ENCODE measurements at regions of chr15 and their contacts with region 1.

Region 1: DNA sequence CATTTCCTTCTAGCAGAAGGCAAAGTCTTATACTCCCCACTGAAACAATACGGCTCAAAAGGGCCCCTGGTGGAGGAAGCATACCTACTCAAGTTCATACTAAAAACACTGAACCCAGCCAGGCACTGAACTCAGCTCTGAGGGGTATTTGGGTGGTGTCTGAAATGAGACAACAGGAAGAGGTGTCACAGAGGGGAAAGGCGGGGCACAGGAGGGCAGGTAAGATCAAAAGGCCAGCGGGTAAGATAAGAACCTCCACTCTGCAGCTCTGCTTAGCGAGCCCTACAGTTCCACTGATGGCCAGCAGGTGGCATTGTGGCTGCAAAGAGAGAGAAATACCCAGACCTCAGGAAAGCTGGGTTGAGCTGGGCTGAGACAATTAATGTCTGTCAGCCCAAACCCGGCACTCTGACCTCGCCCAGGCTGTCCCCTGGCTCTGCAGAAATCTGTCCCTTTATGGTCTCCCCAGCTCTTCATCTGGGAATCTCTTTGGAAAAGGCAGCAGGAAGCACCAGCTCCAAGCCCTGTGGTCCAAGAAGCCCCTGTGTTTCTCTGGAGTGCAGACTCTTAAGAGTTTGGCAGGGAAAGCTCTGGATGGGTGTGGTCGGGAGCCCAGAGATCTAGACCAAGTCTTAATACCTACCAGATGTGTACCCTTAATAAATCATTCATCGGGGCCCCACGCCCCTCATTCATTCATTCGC is 8.4 kb downstream of the MFGE8 start:
- DNase-seq: peak; percentile 67 to 90 (median 85)
- H3K4me3 ChIP-seq: no peak overlapping the region
- H3K27ac ChIP-seq: peak overlapping the region in 19 of 59 donors; percentile 1 to 64 (median 44)
- H3K27me3 ChIP-seq: no peaks in the 10 kb centered on the region
- CTCF ChIP-seq: peak; percentile 95 to 100 (median 99)

Region 2: GRCh38 chr15:88657326-88658069 is 247.3 kb before region 1 on chr15:
- intact Hi-C with region 1: loop called in 1 of 2 experiments (anchors 10 kb)
- DNase-seq: peak in 3 of 10 donors; percentile 45 to 70 (median 58)
- H3K4me3 ChIP-seq: no peak overlapping the region
- H3K27ac ChIP-seq: peak overlapping the region in 5 of 59 donors; percentile 15 to 48 (median 24)
- H3K27me3 ChIP-seq: no peaks in the 10 kb centered on the region
- CTCF ChIP-seq: peak; percentile 41 to 87 (median 77)

Region 3: DNA sequence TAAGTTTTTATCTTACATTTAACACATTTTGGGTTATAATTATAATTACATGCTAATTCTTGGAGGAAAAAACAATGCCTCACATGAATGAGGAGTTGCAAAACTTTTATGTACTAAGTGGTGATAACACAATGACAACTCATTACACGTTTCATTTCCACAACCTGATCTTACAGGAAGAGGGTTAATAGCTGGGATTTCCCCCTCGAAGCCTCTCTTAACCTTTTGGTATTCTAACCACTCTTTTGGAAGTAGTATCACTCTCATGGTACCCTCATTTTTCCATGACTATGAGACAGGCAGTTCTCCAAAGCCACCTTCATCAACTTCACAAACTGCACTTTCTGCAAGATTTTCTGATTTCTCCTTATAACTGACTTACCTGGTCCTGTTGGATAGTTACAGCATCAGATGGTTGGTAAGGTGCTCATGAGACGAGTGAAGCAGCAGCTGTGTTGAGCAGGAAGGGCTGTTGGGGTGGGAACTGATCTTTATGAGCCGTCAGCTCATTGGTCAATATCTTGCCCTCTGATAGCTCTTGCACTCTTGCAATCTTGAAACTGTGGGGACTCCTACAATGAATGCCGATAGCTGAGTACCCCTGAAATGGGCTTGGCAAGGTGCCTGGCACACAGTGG is 59.9 kb before region 1 on chr15:
- intact Hi-C with region 1: no loop called
- DNase-seq: no peak
- H3K4me3 ChIP-seq: no peak overlapping the region
- H3K27ac ChIP-seq: no peak overlapping the region
- H3K27me3 ChIP-seq: peaks cover 0 to 10% (median 0%) of the 10 kb centered on the region in 45 donors
- CTCF ChIP-seq: no peak

Region 4: DNA sequence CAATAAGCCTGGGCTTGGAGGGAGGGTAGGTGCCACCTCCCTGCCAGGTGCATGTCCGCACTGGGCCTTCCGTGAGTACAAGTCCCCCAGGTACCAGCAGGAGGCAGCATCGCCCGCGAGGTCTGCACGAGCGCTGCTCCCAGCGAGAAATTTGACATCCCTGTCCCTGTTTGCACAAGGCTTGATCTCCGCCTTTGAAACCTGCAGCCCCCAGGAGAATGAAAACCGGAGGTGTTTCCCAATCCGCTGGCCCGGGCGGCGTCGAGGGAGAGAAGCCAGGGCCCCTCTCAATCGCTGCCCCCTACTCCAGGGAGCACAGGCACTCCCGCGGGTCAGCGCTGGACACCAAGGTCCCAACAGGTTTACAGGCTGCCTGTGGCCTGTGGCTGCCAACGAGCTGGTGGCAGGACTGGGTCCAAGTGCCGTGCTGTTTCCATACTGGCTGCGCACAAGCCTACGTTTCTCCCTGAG is 10.4 kb before region 1 on chr15:
- intact Hi-C with region 1: no loop called
- DNase-seq: peak in 2 of 10 donors; percentile 50 to 59
- H3K4me3 ChIP-seq: peak overlapping the region in 50 of 59 donors; percentile 13 to 62 (median 43)
- H3K27ac ChIP-seq: no peak overlapping the region
- H3K27me3 ChIP-seq: peaks cover 0 to 50% (median 29%) of the 10 kb centered on the region in 45 donors
- CTCF ChIP-seq: peak in 52 of 56 donors; percentile 21 to 68 (median 52)

Region 5: DNA sequence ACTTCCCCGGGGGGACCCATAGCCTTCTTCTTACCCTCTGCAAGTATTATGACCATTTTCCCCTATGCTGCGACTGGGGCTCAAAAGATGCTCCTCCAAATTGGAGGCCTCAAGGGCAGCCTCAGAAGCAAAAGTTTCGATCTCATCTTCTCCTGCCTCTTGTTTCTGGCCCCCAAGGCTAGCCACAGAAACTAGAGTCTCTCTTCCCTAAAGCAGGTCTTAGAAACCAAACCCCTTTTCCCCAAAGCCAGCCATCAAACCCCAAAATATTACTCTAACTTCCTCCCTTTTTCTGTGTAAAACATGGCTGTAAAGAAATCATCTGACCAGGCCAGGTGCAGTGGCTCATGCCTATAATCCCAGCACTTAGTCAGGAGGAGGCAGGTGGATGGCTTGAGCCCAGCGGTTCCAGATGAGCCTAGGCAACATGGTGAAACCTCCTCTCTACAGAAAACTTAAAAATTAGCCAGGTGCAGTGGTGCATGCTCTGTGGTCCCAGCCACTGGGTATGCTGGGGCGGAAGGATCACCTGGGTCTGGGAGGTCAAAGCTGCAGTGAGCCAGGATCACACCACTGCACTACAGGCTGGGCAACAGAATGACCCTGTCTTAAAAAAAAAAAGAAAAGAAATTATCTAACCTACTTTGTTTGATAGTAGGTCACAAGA is 45.1 kb after region 1 on chr15:
- intact Hi-C with region 1: loop called (anchors 1 to 2 kb)
- DNase-seq: no peak
- H3K4me3 ChIP-seq: no peak overlapping the region
- H3K27ac ChIP-seq: no peak overlapping the region
- H3K27me3 ChIP-seq: peaks cover 0 to 4% (median 0%) of the 10 kb centered on the region in 45 donors
- CTCF ChIP-seq: no peak

Region 6: DNA sequence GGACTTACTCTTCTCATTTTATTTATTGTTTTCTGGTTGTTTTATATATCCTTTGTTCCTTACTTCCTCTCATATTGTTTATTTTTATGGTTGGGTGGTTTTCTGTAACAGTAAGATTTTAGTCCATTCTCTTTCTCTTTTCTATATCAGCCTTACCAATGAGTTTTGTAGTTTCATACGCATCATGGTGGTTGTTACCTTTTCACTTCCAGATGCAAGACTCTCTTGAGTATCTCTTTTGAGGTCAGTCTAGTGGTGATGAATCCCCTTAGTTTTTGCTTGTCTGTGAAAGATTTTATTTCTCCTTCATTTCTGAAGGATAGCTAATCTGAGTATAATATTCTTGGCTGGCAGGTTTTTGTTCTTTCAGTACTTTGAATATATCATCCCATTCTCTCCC is 65.5 kb after region 1 on chr15:
- intact Hi-C with region 1: no loop called
- DNase-seq: no peak
- H3K4me3 ChIP-seq: no peak overlapping the region
- H3K27ac ChIP-seq: no peak overlapping the region
- H3K27me3 ChIP-seq: no peaks in the 10 kb centered on the region
- CTCF ChIP-seq: no peak

Region 7: DNA sequence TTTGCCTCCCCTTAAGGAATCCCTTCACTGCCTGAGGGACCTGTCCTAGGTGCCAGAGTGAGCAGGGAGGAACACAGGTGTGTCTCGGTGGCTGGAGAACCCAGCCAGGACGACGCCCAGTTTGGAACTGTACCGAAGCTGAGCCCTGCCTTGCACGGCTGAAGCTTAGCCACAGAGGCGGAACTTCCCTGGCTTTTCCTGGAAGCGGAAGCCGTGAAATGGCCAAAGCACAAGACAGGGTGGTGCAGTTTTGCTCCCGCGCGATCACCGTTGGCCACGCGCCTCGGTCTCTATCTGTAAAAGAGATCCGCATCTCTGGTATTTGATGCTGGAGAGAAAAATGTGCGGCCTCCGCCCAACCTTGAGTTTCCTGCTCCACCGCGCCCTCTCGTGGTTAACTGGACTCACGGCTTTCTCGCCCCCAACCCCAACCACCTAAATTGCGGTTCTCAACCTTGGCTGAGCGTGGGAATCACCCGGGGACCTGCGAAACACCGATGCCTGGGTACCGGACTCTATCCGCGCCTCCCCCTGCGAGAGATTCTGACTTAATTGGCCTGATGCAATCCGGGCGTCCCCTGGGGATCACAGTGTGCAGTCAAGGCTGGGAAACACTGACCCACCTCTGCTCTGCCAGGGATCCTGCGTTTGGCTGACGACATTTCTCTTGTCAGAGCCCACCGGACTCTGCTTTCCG is 112.7 kb after region 1 on chr15:
- intact Hi-C with region 1: loop called (anchors 2 kb)
- DNase-seq: peak; percentile 59 to 82 (median 76)
- H3K4me3 ChIP-seq: peak overlapping the region; percentile 17 to 68 (median 48)
- H3K27ac ChIP-seq: peak overlapping the region in 46 of 59 donors; percentile 0 to 87 (median 62)
- H3K27me3 ChIP-seq: no peaks in the 10 kb centered on the region
- CTCF ChIP-seq: peak; percentile 53 to 88 (median 80)

Region 8: DNA sequence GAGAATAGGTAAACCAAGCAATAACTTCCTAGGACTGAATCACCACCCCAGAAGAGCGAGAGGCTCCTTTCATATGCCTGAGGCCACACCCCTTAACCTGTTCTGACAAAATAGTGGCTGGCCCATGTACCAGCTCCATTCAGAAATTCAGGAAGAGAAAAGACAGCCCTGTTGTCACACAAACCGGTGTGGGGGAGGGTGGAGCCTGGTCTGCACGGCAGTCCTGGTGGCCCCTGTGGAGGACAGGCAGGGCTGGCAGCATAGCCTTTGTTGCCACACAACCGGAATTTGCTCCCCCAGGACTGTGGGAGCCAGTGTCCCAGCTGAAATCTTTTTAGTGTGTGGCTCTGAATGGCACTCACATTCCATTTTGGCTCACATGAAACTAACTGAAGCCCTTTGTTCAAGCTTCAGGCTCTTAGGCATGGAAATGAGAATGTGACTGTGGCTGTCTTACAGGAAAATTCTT is 292.8 kb after region 1 on chr15:
- intact Hi-C with region 1: loop called in 1 of 2 experiments (anchors 10 kb)
- DNase-seq: peak in 9 of 10 donors; percentile 33 to 80 (median 73)
- H3K4me3 ChIP-seq: peak overlapping the region in 6 of 59 donors; percentile 4 to 34 (median 20)
- H3K27ac ChIP-seq: peak overlapping the region; percentile 69 to 99 (median 92)
- H3K27me3 ChIP-seq: no peaks in the 10 kb centered on the region
- CTCF ChIP-seq: peak in 14 of 56 donors; percentile 7 to 48 (median 16)